ENCODE measurements at regions of chr12 and their contacts with region 1.

Region 1: GRCh38 chr12:99043319-99043914 is 398.3 kb downstream of the APAF1 start:
- H3K4me3 ChIP-seq: no peak overlapping the region
- H3K27ac ChIP-seq: no peak overlapping the region
- H3K4me1 ChIP-seq: no peaks in the 10 kb centered on the region
- CTCF ChIP-seq: no peak

Region 2: GRCh38 chr12:99053616-99054362 is 10.4 kb after region 1 on chr12:
- CTCF ChIA-PET with region 1: interaction called, 10 read pairs
- POLR2A ChIA-PET with region 1: no interaction called
- H3K4me3 ChIP-seq: no peak overlapping the region
- H3K27ac ChIP-seq: no peak overlapping the region
- H3K4me1 ChIP-seq: no peaks in the 10 kb centered on the region
- CTCF ChIP-seq: no peak

Region 3: GRCh38 chr12:99068993-99069747 is 25.8 kb after region 1 on chr12:
- CTCF ChIA-PET with region 1: interaction called, 16 read pairs
- POLR2A ChIA-PET with region 1: no interaction called
- H3K4me3 ChIP-seq: no peak overlapping the region
- H3K27ac ChIP-seq: no peak overlapping the region
- H3K4me1 ChIP-seq: no peaks in the 10 kb centered on the region
- CTCF ChIP-seq: no peak

Region 4: DNA sequence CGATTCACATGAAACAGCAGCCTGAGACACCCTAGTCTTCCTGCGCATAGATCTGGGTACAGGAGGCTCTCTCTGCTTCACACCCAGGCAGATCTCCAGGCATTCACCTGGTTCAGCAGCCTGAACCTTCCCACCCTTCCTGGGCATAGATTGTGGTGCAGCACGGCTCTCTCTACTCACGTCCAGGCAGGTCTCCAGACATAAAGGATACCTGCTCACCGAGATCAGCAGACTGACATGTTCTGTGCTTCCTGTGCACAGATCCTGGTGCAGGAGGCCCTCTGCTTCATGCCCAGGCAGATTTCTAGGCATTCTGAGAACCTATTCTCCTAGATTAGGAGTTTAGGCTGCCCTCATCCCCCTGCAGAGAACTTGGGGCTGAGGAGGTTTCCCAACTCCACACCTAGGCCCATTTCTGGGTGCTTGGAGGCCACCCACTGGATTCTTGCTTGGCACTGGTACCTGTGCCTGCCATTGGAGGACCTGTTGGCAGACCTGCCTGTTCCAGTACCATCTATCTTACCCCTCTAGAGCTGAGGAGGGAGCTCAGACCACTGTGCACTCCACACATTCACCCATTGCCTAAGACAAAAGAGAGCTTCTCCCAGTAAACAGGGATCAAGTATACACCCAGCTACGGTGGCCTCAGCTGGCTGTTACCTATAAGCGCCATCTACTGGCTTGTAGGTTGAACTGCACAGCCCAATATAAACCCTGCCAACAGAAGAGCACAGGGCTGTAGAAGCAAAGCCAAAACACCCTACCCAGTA is 576.2 kb after region 1 on chr12:
- CTCF ChIA-PET with region 1: interaction called, 26 read pairs
- POLR2A ChIA-PET with region 1: no interaction called
- H3K4me3 ChIP-seq: no peak overlapping the region
- H3K27ac ChIP-seq: no peak overlapping the region
- H3K4me1 ChIP-seq: no peaks in the 10 kb centered on the region
- CTCF ChIP-seq: no peak

Region 5: DNA sequence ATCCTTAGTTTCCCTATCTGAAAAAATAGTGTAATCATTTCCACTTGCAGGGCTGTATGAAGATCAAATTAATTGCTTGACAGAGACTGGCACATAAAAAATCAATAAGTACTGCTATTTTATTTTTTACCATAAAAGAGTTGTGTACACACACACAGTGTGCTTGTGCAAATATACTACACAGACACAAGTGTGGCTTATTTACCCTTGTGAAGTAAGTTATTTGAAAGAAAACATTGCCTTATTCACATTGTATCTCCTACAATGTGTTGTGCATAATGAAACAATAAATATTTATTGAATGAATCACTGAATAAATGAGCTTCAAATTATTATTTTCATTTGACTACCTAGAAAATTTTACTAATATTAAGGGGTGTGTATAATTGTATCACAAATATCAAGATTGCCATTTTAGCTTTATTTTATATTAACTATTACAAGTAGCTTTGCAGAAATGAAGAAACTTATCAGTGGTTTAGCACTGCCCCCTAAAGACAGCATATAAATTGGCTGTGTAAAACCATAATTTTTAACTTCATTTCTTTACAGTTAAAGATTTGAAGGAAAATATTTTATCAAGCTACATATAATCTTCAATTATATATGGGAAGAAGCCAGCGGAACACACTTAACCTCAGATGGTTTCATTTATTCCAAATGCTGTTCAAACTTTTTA is 615.4 kb after region 1 on chr12:
- CTCF ChIA-PET with region 1: interaction called, 23 read pairs
- POLR2A ChIA-PET with region 1: no interaction called
- H3K4me3 ChIP-seq: no peak overlapping the region
- H3K27ac ChIP-seq: no peak overlapping the region
- H3K4me1 ChIP-seq: peaks cover 5% of the 10 kb centered on the region; the same call in 1 of the 2 replicates
- CTCF ChIP-seq: no peak